ENCODE measurements at regions of chr18 and their contacts with region 1.

Region 1: GRCh38 chr18:63523660-63524059 is 18.5 kb upstream of the SERPINB12 start:
- DNase-seq: no peak
- ATAC-seq: no peak
- H3K4me3 ChIP-seq: no peak overlapping the region
- H3K27ac ChIP-seq: no peak overlapping the region
- H3K4me1 ChIP-seq: no peaks in the 10 kb centered on the region
- H3K27me3 ChIP-seq: no peaks in the 10 kb centered on the region; a peak in 1 of 4 replicates
- CTCF ChIP-seq: no peak
- EP300 ChIP-seq: no peak
- POLR2A ChIP-seq: no peak
- RAD21 ChIP-seq: no peak

Region 2: DNA sequence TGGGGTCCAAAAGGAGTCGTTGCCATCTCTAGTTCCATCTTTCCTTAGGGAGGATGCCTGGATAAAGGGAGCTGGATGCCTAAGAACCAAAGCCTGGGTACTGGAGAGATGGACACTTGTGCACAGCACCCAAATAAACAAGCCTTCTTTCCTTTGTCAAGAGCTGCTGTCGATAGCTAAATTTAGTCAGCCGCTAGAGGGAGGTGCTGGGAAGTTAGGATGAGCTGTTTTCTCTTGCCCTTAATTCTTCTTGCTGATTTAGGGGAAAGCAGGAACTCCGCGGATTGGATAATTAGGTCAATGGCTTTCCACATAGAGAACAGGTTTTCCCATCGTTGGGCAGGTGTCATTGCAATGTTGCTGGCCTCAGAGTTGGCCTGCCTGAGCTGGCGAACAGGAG is 12.4 kb before region 1 on chr18:
- CTCF ChIA-PET with region 1: interaction called, 72 read pairs
- POLR2A ChIA-PET with region 1: no interaction called
- RAD21 ChIA-PET with region 1: interaction called, 5 read pairs
- SMC1A ChIA-PET with region 1: interaction called, 18 read pairs
- in situ Hi-C with region 1: no loop called
- intact Hi-C with region 1: no loop called
- DNase-seq: no peak
- ATAC-seq: peak; percentile 64
- H3K4me3 ChIP-seq: no peak overlapping the region
- H3K27ac ChIP-seq: no peak overlapping the region
- H3K4me1 ChIP-seq: no peaks in the 10 kb centered on the region
- H3K27me3 ChIP-seq: 0 out of 4 replicates have a peak, but pooled peaks cover 0 to 1% of the 10 kb centered on the region in 2 experiments
- CTCF ChIP-seq: peak; percentile 52 to 67 (median 52)
- EP300 ChIP-seq: no peak
- POLR2A ChIP-seq: no peak
- RAD21 ChIP-seq: peak; percentile 16; the same call in 1 of the 2 replicates

Region 3: DNA sequence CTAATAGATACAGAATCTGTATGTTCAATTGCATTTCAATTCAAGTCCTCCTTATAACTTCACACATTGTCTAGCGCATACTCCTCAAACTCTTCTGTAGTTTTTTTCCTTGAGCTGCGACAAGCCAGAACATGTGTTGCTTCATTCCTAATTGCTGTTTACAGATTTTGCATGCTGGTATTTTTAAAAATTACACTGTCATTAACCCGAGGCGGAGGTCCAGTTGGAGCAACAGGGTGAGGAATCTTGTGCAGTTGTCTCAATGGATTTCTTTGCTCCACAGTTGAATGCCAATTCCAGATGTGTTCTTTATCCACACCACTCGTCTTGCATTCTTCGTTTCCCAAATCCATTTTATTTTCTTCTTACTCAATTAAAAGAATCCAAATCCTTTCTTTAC is 47.1 kb after region 1 on chr18:
- CTCF ChIA-PET with region 1: interaction called, 237 read pairs
- POLR2A ChIA-PET with region 1: no interaction called
- RAD21 ChIA-PET with region 1: interaction called, 149 read pairs
- SMC1A ChIA-PET with region 1: interaction called, 130 read pairs
- in situ Hi-C with region 1: loop called (anchors 5 kb)
- intact Hi-C with region 1: no loop called
- DNase-seq: no peak
- ATAC-seq: no peak
- H3K4me3 ChIP-seq: no peak overlapping the region
- H3K27ac ChIP-seq: no peak overlapping the region
- H3K4me1 ChIP-seq: no peaks in the 10 kb centered on the region
- H3K27me3 ChIP-seq: peaks cover 0 to 5% of the 10 kb centered on the region in 2 experiments; a peak in 2 of 4 replicates
- CTCF ChIP-seq: no peak
- EP300 ChIP-seq: no peak
- POLR2A ChIP-seq: no peak
- RAD21 ChIP-seq: no peak

Region 4: DNA sequence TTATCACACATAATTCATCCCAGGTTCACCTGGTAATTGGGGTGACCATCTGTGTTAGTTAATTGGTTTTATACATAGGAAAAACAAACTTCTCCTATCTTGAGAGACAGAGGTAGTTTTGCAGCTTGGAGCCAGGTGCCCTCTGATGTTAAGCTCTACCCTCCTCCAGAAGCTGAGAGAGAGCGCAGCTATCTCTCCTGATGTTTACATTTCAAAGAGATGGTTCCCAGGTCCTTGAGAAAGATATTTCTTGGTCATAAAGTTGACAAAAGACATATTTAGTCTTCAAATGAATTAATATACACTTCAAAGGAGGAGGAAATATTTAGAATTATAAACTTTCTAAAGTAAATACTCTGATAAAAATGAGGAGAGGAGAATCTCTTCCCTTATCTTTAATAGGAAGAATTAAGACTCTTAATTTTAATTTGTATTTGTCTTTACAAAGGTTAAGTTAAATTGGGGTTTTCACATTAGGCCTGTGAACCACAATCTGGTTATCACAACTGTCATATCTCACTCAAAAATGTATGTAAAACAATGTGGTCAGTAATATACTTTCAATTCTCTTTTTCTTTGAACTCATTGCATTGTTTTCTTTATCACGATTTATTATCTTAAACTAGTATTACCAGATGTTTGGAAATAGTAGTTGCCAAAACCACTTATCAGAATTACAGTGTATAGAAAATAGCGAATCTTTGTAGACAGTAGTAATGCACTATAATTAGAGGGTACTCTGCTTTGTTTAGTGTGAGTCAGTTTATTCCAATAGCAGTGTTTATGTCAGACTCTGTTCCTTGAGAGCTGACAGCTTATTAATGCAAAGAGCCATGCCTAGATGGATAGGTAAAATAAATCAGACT is 93.6 kb after region 1 on chr18:
- CTCF ChIA-PET with region 1: no interaction called
- POLR2A ChIA-PET with region 1: no interaction called
- RAD21 ChIA-PET with region 1: no interaction called
- SMC1A ChIA-PET with region 1: no interaction called
- in situ Hi-C with region 1: no loop called
- intact Hi-C with region 1: no loop called
- DNase-seq: no peak
- ATAC-seq: peak; percentile 69
- H3K4me3 ChIP-seq: no peak overlapping the region
- H3K27ac ChIP-seq: no peak overlapping the region
- H3K4me1 ChIP-seq: no peaks in the 10 kb centered on the region
- H3K27me3 ChIP-seq: no peaks in the 10 kb centered on the region
- CTCF ChIP-seq: no peak
- EP300 ChIP-seq: no peak
- POLR2A ChIP-seq: no peak
- RAD21 ChIP-seq: no peak

Region 5: GRCh38 chr18:63676526-63676925 is 152.9 kb after region 1 on chr18:
- CTCF ChIA-PET with region 1: interaction called, 17 read pairs
- POLR2A ChIA-PET with region 1: no interaction called
- RAD21 ChIA-PET with region 1: no interaction called
- SMC1A ChIA-PET with region 1: interaction called, 5 read pairs
- in situ Hi-C with region 1: loop called (anchors 10 kb)
- intact Hi-C with region 1: loop called (anchors 1 kb)
- DNase-seq: no peak
- ATAC-seq: peak; percentile 86
- H3K4me3 ChIP-seq: no peak overlapping the region
- H3K27ac ChIP-seq: no peak overlapping the region
- H3K4me1 ChIP-seq: no peaks in the 10 kb centered on the region
- H3K27me3 ChIP-seq: no peaks in the 10 kb centered on the region
- CTCF ChIP-seq: peak; percentile 58 to 66 (median 59); a peak in 5 of 6 replicates
- EP300 ChIP-seq: no peak
- POLR2A ChIP-seq: no peak
- RAD21 ChIP-seq: peak; percentile 68

Measured in GM12878 (cell line).